A673 (cell line): ENCODE measurements at regions of chr18 and their contacts with region 1.

Region 1: GRCh38 chr18:12068950-12069320 is 24.7 kb upstream of the ANKRD62 start:
- DNase-seq: peak; percentile 14
- H3K4me3 ChIP-seq: peak overlapping the region; percentile 36
- H3K27ac ChIP-seq: no peak overlapping the region
- H3K4me1 ChIP-seq: no peaks in the 10 kb centered on the region
- H3K27me3 ChIP-seq: peaks cover 3% of the 10 kb centered on the region
- CTCF ChIP-seq: no peak

Region 2: DNA sequence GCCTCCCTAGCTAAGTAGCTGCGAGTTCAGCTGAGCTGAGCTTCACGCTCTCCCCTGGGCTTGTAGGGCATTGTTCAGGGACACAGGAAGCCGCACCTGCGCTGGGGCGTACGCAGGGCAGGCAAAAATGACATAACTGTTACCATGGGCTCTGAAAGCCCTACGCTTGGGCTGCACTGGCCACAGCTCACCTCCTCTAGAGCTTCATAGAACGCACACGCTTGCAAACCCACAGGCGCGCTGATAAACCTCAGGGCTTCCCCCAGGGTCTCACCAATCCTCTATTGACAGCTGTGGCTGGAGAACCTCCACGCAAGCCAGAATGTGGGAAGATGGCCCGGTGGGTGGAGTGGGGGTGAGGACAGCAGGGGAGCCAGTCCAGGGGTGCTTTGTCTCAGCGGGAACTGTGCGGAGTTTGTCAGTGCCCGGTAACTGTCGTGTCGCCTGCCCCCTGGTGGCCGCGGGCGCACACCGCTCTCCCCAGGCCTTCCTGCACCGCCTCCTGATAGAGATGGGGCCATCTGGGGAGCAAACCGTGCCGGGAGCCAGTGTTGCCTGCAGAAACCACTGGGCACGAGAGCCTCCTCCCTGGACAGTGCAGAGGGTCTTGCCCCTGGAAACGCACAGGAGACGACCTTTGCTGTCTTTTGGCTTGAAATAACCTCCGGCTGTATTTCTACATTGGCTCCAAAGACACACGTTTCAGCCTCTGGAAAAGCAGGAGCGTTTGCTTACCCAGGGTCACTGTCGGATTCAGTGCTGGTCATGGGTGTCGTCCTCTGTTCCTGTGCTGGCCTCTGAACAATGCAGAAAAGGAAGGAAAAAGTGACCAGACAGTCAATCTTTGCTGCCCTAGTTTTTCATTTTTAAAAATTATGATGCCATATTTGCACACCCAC is 168.2 kb after region 1 on chr18:
- CTCF ChIA-PET with region 1: interaction called, 6 read pairs
- POLR2A ChIA-PET with region 1: no interaction called
- intact Hi-C with region 1: loop called (anchors 1 kb)
- DNase-seq: peak; percentile 75
- H3K4me3 ChIP-seq: no peak overlapping the region
- H3K27ac ChIP-seq: no peak overlapping the region
- H3K4me1 ChIP-seq: no peaks in the 10 kb centered on the region
- H3K27me3 ChIP-seq: peaks cover 13% of the 10 kb centered on the region
- CTCF ChIP-seq: peak; percentile 97